ENCODE measurements at regions of chr3 and their contacts with region 1.

Region 1: DNA sequence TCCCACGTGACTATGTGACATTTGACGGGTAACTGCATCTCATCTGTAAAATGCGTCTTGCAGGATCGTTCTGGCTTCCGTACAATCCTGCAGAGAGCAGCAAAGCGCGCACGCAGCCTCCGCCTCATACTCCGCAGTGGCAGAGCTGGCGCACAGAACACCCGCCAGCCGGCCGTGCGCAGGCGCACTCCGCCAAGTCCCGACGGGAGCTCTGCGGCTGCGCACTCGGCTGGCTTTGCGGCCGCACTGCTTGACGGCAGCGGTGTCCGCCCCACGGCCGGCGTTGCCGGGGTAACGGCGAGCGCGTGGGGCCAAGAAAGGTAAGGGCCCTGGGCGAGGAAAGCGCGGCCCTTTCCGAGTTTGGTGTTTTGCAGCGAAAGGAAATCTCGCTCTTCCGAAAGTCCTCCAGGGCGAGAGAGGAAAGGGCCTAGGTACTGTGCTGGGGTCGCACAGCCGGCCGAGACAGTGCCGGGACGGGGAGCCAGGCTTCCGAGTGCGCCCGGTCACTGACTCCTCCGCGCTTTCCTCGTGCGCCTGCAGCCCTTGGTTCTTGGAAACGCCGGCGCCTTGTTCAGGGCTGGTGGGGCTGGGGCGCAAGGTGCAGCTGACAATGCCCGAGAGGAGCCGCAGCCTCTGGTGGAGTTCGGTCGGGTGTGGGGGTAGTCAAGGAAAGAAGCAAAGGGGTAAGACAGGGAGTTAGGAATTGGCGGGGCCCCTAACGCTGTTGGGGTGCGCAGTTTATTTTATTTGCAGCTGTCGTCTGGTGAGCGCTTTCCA is at the start of gene TSEN2:
- DNase-seq: peak; percentile 83 to 90
- ATAC-seq: peak; percentile 89 to 90
- H3K4me3 ChIP-seq: peak within 1 kb of the TSS; percentile 73 to 89 (median 78)
- H3K27ac ChIP-seq: peak within 1 kb of the TSS; percentile 84 to 89 (median 86)
- H3K4me1 ChIP-seq: peaks cover 15 to 23% of the 10 kb centered on the region in 2 donors
- H3K27me3 ChIP-seq: no peaks in the 10 kb centered on the region
- CTCF ChIP-seq: peak in 3 of 5 experiments; percentile 20 to 27 (median 26)
- POLR2A ChIP-seq: peak; percentile 55 to 77
- total RNA-seq, gene TSEN2: 10.7 to 19.5 (median 12.0) TPM

Region 2: DNA sequence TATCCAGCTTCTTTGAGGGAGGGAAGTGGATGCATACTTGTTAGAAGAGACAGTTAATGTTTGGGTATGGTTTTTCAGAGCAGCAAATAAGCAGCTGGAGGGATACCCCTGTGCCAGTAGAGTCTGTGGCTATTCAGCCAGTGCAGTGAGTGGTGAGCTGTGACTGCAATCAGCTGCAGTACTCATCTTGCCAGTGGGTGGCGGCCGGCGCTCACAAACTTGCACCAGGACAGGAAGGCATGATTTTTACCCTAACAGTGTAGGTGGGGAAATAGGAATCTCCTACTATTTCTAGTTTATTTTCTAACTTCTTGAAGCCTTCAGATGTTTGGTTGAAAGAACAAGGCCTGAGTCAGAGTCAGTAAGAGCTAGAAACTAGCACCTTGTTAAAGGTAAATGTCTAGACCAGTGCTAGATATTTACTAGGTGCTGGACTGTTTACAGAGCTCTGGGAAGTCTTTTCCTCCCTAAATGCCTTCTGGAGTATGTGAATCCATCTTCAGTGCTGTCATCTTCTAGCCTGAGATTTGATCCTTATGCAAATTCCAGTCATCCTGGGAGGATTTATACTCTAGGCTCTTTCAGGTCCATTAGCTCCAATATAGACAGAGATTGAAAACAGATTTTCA is 349.2 kb before region 1 on chr3:
- in situ Hi-C with region 1: loop called (anchors 5 to 10 kb)
- intact Hi-C with region 1: loop called (anchors 1 kb)
- DNase-seq: peak; percentile 49 to 62
- ATAC-seq: peak; percentile 68 to 72
- H3K4me3 ChIP-seq: no peak overlapping the region
- H3K27ac ChIP-seq: peak overlapping the region in 3 of 4 donors; percentile 5 to 92 (median 11)
- H3K4me1 ChIP-seq: peaks cover 12 to 19% of the 10 kb centered on the region in 2 donors
- H3K27me3 ChIP-seq: no peaks in the 10 kb centered on the region
- CTCF ChIP-seq: peak; percentile 84 to 92 (median 88)
- POLR2A ChIP-seq: no peak

Region 3: DNA sequence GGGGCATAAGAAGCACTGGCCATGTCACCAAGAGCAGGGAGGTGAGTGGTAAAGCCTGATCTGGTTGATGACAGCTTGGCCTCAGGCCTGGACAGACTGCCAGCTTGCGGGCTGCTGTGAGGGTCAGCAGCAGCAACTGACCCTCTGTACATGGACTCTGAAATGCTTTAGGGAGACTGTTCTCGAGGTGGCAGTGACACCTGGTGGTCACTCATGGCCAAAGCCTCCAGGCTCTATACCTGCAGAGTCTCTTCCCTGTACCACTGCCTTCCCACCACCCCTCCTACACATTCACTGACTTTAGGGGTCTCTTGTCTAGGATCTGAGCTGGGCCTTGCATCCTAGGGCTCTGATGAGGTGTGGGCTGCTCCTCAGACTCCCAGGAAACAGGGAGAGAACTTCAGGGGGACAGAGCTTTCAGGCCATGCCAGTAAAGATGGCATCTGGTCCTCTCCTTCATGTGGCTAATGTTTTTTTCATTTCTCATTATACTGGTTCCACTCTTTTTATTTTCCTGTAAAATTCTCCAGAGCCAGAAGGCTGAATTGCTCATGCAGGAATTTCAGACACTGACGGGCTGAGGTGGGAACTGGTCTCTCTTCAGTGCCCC is 308.4 kb before region 1 on chr3:
- in situ Hi-C with region 1: loop called in 1 of 4 experiments (anchors 10 kb)
- intact Hi-C with region 1: loop called (anchors 5 kb)
- DNase-seq: peak; percentile 26 to 60
- ATAC-seq: peak; percentile 79 to 86
- H3K4me3 ChIP-seq: no peak overlapping the region
- H3K27ac ChIP-seq: peak overlapping the region in 2 of 4 donors; percentile 12 to 33
- H3K4me1 ChIP-seq: peaks cover 5 to 6% of the 10 kb centered on the region in 2 donors
- H3K27me3 ChIP-seq: no peaks in the 10 kb centered on the region
- CTCF ChIP-seq: peak; percentile 85 to 96 (median 93)
- POLR2A ChIP-seq: no peak

Region 4: DNA sequence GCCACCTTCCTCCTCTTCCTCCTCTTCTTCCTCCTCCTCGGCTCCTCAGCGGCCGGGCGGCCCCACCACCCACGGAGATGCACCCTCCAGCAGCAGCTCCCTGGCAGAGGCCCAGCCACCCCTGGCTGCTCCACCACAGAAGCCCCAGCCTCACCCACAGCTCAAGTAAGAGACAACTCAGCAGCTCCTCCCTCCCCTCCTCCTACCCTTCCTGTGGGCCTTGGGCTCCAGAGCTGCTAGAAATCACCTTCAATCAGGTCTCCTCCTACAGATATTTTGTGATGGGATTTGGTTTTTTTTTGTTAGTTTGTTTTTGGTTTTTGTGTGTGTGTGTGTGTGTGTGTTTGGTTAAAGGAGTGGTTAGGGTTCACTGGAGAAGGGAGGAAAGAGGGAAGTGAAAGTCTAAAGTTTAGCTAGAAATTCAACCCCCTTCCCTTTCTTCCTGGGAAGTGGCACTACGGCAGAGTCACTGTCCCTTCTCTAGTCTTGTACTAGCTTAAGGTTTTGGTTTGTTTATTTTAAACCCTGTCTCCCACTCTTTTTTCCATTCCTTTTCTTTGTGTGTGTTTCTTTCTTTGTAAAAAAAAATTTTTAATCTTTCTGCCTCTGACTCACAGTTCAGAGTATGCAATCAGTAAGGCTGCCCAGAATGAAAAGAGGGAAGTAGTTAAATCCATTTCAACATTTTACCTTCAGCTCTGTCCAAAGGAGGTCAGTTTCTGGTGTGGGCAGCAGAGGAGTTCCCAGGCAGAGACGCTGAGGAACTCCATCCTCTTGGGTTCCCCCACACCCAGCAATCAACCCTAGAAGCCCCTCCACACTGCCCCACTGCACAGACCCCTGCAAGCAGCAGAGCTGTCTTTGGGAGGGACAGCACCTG is 296.7 kb before region 1 on chr3:
- in situ Hi-C with region 1: loop called in 1 of 4 experiments (anchors 10 kb)
- intact Hi-C with region 1: no loop called
- DNase-seq: no peak
- ATAC-seq: peak in 1 of 2 donors; percentile 58
- H3K4me3 ChIP-seq: no peak overlapping the region
- H3K27ac ChIP-seq: no peak overlapping the region
- H3K4me1 ChIP-seq: no peaks in the 10 kb centered on the region
- H3K27me3 ChIP-seq: no peaks in the 10 kb centered on the region
- CTCF ChIP-seq: no peak
- POLR2A ChIP-seq: no peak

Region 5: DNA sequence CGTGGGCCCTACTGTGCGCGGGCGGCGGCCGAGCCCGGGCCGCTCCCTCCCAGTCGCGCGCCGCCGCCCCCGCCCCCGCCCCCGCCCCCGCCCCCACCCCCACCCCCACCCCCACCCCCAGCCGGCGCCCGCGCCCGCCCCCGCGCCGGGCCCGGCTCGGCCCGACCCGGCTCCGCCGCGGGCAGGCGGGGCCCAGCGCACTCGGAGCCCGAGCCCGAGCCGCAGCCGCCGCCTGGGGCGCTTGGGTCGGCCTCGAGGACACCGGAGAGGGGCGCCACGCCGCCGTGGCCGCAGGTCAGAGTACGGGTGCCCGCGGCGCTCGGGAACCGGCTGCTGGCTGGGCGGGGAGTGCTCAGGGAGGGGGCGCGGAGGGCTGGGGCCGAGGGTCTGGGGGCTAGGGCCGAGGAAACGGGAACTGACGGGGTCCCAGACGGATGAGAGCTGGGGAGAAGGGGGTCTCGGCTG is 196.6 kb before region 1 on chr3:
- in situ Hi-C with region 1: no loop called
- intact Hi-C with region 1: loop called (anchors 5 kb)
- DNase-seq: no peak
- ATAC-seq: peak; percentile 35 to 46
- H3K4me3 ChIP-seq: peak overlapping the region; percentile 62 to 71 (median 66)
- H3K27ac ChIP-seq: peak overlapping the region; percentile 76 to 80 (median 79)
- H3K4me1 ChIP-seq: peaks cover 0 to 11% of the 10 kb centered on the region in 2 donors
- H3K27me3 ChIP-seq: peaks cover 5 to 46% (median 26%) of the 10 kb centered on the region in 3 donors
- CTCF ChIP-seq: no peak
- POLR2A ChIP-seq: no peak

Region 6: DNA sequence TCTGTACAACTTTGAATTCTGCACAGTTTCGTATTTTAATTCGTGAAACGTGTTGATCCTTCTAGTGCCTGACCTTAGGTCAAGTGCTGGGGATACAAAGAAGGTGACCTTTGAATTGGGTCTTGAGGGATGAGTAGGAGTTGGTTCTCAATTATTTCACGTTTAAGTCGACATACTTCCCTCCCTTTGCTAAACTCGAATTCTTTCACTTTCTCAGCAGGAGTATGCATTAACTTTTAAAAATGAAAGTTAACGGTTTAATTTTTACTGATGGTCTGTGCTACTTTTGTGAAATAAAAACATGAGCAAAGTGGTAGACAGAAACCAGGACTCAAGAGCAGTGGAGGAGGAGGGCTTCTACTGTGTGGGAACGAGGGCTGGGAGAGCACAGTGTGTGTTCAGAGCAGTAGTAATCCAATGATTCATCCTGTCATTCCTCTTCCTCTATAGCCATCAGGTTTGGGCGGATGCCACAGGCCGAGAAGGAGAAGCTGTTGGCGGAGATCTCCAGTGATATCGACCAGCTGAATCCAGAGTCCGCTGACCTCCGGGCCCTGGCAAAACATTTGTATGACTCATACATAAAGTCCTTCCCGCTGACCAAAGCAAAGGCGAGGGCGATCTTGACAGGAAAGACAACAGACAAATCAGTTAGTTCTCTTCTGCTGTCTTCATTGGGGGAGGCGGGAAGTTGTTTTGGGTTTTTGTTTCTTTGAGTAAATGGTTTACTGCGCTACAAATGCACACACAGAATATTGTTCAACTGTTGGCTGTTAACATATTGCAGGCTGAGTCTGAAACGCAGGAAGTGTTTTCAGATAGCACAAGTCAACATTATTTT is 78.7 kb before region 1 on chr3:
- in situ Hi-C with region 1: no loop called
- intact Hi-C with region 1: no loop called
- DNase-seq: peak; percentile 58 to 62
- ATAC-seq: peak; percentile 76 to 86
- H3K4me3 ChIP-seq: no peak overlapping the region
- H3K27ac ChIP-seq: peak overlapping the region in 3 of 4 donors; percentile 6 to 57 (median 46)
- H3K4me1 ChIP-seq: no peaks in the 10 kb centered on the region
- H3K27me3 ChIP-seq: no peaks in the 10 kb centered on the region
- CTCF ChIP-seq: no peak
- POLR2A ChIP-seq: no peak

Region 7: GRCh38 chr3:12508291-12508700 is 23.9 kb after region 1 on chr3:
- in situ Hi-C with region 1: no loop called
- intact Hi-C with region 1: no loop called
- DNase-seq: peak; percentile 48 to 54
- ATAC-seq: peak; percentile 77 to 85
- H3K4me3 ChIP-seq: no peak overlapping the region
- H3K27ac ChIP-seq: peak overlapping the region; percentile 69 to 81 (median 70)
- H3K4me1 ChIP-seq: peaks cover 14% of the 10 kb centered on the region in 2 donors
- H3K27me3 ChIP-seq: no peaks in the 10 kb centered on the region
- CTCF ChIP-seq: no peak
- POLR2A ChIP-seq: peak in 1 of 2 donors; percentile 6

Region 8: GRCh38 chr3:12556671-12557472 is 72.5 kb after region 1 on chr3 and contains the start of gene MKRN2:
- in situ Hi-C with region 1: no loop called
- intact Hi-C with region 1: loop called (anchors 2 kb)
- DNase-seq: peak; percentile 74 to 84
- ATAC-seq: peak; percentile 80 to 81
- H3K4me3 ChIP-seq: peak within 1 kb of the TSS; percentile 75 to 99 (median 94)
- H3K27ac ChIP-seq: peak within 1 kb of the TSS; percentile 96 to 99 (median 98)
- H3K4me1 ChIP-seq: peaks cover 52 to 55% of the 10 kb centered on the region in 2 donors
- H3K27me3 ChIP-seq: peaks cover 15 to 26% (median 17%) of the 10 kb centered on the region in 3 donors
- CTCF ChIP-seq: peak in 2 of 5 experiments; percentile 35 to 40
- POLR2A ChIP-seq: peak; percentile 99
- total RNA-seq, gene MKRN2: 14.8 to 29.9 (median 25.1) TPM

Region 9: GRCh38 chr3:12719984-12720898 is 235.9 kb after region 1 on chr3:
- in situ Hi-C with region 1: no loop called
- intact Hi-C with region 1: loop called (anchors 5 kb)
- DNase-seq: peak; percentile 45 to 60
- ATAC-seq: peak; percentile 90 to 96
- H3K4me3 ChIP-seq: peak overlapping the region; percentile 21 to 52 (median 46)
- H3K27ac ChIP-seq: peak overlapping the region; percentile 0 to 35 (median 25)
- H3K4me1 ChIP-seq: peaks cover 3 to 4% of the 10 kb centered on the region in 2 donors
- H3K27me3 ChIP-seq: no peaks in the 10 kb centered on the region
- CTCF ChIP-seq: peak; percentile 83 to 93 (median 85)
- POLR2A ChIP-seq: no peak

Region 10: DNA sequence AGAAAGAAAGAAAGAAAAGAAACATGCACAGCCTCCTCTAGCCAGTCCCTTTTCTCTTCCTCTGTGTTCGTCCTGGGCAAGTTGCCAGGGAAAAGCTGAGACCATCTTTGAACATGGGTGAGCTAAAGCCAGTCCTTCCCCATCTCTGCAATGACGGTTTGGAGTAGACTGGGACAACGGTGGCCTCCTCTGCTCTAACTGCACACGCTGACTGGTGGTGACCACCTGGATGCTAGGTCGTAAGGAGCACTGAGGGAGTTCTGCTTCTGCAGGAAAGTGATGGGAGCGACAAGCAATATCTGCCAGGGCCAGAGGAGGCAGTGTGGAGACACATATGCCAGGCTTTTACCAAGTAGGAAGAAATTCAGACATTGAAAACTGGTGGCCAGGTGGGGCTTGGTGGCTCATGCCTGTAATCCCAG is 824.0 kb after region 1 on chr3:
- in situ Hi-C with region 1: no loop called
- intact Hi-C with region 1: no loop called
- DNase-seq: no peak
- ATAC-seq: peak in 1 of 2 donors; percentile 23
- H3K4me3 ChIP-seq: no peak overlapping the region
- H3K27ac ChIP-seq: no peak overlapping the region
- H3K4me1 ChIP-seq: no peaks in the 10 kb centered on the region
- H3K27me3 ChIP-seq: no peaks in the 10 kb centered on the region
- CTCF ChIP-seq: peak in 1 of 5 experiments; percentile 29
- POLR2A ChIP-seq: no peak